Gastrocnemius medialis (tissue), 4 donors: ENCODE measurements at regions of chr10 and their contacts with region 1.

Region 1: GRCh38 chr10:70227548-70228320 is 5.5 kb downstream of the PPA1 start:
- DNase-seq: no peak
- ATAC-seq: no peak
- H3K4me3 ChIP-seq: no peak overlapping the region
- H3K27ac ChIP-seq: peak overlapping the region; percentile 11 to 25 (median 18)
- H3K4me1 ChIP-seq: peaks cover 18 to 19% of the 10 kb centered on the region in 2 donors
- H3K27me3 ChIP-seq: no peaks in the 10 kb centered on the region
- CTCF ChIP-seq: no peak
- POLR2A ChIP-seq: no peak

Region 2: DNA sequence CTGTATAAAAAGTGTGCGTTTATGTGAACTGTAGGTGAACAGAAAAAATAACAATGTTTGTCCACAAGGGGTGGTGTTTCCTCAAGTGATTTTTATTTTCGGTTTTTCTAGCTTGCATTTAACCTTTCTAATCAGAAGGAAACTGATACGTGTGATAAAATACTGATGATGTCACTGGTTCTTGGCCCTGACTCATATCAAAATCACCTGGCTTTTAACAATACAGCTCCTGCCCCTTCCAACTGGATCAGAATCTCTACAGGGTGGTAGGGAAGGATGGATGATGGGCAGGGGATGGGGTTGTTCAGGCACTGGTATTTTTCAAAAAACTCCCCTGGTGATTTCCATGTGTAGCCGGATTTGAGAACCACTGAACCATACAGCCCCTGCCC is 45.2 kb after region 1 on chr10:
- in situ Hi-C with region 1: loop called in 1 of 4 experiments (anchors 10 kb)
- intact Hi-C with region 1: no loop called
- DNase-seq: no peak
- ATAC-seq: peak in 1 of 2 donors; percentile 24
- H3K4me3 ChIP-seq: no peak overlapping the region
- H3K27ac ChIP-seq: no peak overlapping the region
- H3K4me1 ChIP-seq: no peaks in the 10 kb centered on the region
- H3K27me3 ChIP-seq: no peaks in the 10 kb centered on the region
- CTCF ChIP-seq: peak; percentile 30 to 59 (median 52)
- POLR2A ChIP-seq: no peak